ENCODE measurements at regions of chr1 and their contacts with region 1.

Region 1: DNA sequence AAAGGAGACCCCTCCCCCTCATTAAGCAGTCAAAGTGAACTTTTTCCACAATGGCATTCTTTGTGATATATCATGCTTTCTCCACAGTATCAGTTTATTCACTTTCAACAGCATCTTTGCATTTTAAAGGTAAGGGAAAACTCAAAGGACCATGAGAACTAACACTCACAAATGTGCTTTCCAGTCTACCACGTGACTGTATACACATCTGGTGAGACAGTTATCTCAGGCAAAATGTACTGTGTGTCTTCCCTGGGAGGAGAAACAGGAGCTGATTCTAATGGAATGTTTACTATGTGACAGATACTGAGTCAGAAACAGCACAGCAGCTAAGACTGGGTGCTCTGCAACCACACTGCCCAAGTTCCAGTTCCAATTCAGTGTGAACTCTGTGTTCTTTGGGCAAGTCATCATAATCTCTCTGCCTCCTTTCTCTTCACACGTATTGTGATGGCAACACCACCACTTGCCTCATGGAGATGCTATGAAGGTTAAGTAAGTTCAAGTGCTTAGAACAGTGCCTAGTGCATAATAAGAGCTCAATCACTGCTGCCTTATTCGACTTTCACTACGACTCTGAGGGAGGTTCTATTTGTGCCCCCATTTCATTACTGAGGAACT is 79.0 kb downstream of the SLC45A1 start:
- DNase-seq: peak; percentile 71
- H3K4me3 Mint-ChIP-seq: peak overlapping the region; percentile 10
- H3K27ac Mint-ChIP-seq: peak overlapping the region; percentile 83
- H3K4me1 Mint-ChIP-seq: peaks cover 71% of the 10 kb centered on the region
- H3K27me3 Mint-ChIP-seq: no peaks in the 10 kb centered on the region

Region 2: DNA sequence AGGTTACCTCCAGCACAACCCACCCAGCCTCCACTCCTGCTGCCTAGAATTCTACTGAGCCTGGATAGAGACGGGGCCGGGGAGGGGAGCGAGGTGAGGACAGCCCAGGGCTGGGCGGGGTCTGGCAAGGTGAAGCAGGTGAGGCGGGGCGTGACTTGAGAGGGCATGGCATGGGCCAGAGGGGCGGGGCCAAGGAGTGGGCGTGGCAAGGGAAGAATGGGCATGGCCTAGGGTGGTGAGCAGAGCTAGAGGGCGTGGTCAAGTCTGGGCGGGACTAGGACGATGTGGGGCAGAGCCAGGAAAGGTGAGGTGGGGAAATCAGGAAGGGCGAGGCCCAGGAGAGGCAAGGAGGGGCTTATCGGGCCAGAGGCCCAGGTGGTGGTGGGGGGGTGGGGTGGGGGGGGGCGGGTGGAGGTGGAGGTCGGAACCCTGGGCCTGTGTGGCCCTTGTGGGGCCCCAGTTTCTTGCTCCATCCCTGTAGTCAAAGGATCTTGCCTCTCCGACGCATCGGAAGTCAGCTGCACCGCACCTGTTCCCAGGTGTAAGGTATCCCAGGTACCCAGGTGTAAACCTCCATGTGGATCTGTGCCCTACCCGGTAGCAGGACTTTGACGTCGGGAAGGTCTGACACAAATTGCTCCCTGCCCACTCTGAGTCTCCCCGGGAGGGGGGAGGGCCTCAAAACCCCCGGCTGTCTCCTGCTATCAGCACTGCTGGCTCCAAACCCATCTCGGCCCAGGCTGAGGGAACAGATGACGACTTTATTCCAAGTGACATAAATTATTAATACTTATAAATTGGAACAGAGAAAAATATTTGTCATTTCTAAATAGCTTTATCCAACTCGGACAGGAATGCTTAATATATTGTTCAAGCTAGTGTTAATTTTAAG is 511.1 kb before region 1 on chr1:
- CTCF ChIA-PET with region 1: no interaction called
- intact Hi-C with region 1: no loop called
- DNase-seq: peak; percentile 28
- H3K4me3 Mint-ChIP-seq: no peak overlapping the region
- H3K27ac Mint-ChIP-seq: no peak overlapping the region
- H3K4me1 Mint-ChIP-seq: no peaks in the 10 kb centered on the region
- H3K27me3 Mint-ChIP-seq: peaks cover 26% of the 10 kb centered on the region

Region 3: DNA sequence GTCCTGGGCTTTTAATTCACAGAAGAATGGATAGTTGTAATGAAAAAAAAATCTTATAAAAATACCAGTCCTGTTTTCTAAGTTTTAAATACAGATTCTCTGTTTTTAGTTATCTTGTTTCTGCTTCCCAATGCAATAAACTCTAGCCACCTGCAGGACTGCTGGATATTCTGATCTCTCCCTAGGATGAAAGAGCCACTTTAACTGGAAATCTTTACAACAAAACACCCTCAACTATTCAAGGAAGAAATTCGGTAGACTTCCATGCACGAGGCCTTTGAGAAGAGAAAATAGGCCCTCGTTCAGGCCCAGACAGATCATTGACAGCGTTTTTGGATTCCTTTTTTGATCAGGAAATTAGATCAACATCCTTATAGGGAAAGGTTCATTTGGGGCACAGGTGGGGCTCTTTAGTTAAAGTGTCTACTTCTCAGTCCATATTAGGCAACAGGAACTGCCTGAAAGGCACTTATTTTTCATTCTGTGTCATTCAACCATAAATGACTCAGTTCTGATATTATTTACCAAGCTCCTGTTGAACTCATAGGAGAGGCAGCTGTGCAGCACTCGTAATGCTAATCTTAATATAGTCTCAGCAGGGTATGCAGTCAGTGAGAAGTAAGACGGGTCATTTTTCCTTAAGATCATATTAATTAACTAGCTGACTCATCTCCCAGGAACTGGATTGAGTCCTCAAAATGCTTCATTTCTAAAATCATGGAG is 299.7 kb before region 1 on chr1:
- CTCF ChIA-PET with region 1: no interaction called
- intact Hi-C with region 1: no loop called
- DNase-seq: peak; percentile 53
- H3K4me3 Mint-ChIP-seq: no peak overlapping the region
- H3K27ac Mint-ChIP-seq: peak overlapping the region; percentile 81
- H3K4me1 Mint-ChIP-seq: peaks cover 36% of the 10 kb centered on the region
- H3K27me3 Mint-ChIP-seq: peaks cover 17% of the 10 kb centered on the region

Region 4: DNA sequence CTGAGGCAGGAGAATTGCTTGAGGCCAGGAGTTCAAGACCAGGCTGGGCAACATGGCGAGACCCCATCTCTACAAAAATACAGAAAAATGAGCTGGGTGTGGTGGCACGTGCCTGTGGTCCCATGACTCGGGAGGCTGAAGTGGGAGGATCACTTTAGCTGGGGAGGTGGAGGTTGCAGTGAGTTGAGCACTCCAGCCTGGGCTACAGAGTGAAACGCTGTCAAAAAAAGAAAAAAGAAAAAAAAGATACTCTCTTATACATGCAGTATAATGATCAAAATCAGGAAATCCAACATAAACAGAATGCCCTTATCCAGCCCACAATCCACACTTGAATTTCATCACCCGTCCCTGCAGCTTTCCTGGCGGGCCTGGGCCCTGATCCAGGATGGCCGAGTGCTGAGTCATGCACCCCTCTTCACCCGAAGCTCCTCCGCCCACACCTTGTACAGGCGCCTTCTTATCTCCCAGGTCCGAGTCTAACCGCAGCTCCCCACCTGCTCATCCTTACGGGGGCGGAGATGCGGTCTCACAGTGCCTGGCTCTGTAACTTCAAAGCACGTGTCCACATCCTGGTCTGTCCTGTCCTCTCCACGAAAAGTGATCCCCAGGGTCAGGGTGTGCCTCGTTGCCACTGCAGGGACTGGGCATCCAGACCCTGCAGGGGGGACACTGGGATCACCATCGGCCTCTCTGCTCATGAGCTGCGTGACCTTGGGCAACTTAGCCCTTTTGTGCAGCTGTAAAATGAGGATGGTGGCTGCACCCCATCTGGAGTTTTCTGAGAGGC is 199.2 kb before region 1 on chr1:
- CTCF ChIA-PET with region 1: no interaction called
- intact Hi-C with region 1: no loop called
- DNase-seq: no peak
- H3K4me3 Mint-ChIP-seq: no peak overlapping the region
- H3K27ac Mint-ChIP-seq: no peak overlapping the region
- H3K4me1 Mint-ChIP-seq: peaks cover 5% of the 10 kb centered on the region
- H3K27me3 Mint-ChIP-seq: no peaks in the 10 kb centered on the region

Region 5: GRCh38 chr1:8423650-8424538 is 27.0 kb after region 1 on chr1:
- CTCF ChIA-PET with region 1: interaction called, 5 read pairs
- intact Hi-C with region 1: loop called (anchors 1 kb)
- DNase-seq: peak; percentile 62
- H3K4me3 Mint-ChIP-seq: peak overlapping the region; percentile 85
- H3K27ac Mint-ChIP-seq: peak overlapping the region; percentile 97
- H3K4me1 Mint-ChIP-seq: peaks cover 38% of the 10 kb centered on the region
- H3K27me3 Mint-ChIP-seq: no peaks in the 10 kb centered on the region

Region 6: GRCh38 chr1:8525558-8526275 is 128.8 kb after region 1 on chr1:
- CTCF ChIA-PET with region 1: interaction called, 3 read pairs
- intact Hi-C with region 1: loop called (anchors 5 kb)
- DNase-seq: peak; percentile 86
- H3K4me3 Mint-ChIP-seq: no peak overlapping the region
- H3K27ac Mint-ChIP-seq: no peak overlapping the region
- H3K4me1 Mint-ChIP-seq: peaks cover 26% of the 10 kb centered on the region
- H3K27me3 Mint-ChIP-seq: no peaks in the 10 kb centered on the region

Region 7: GRCh38 chr1:8660411-8660828 is 263.5 kb after region 1 on chr1:
- CTCF ChIA-PET with region 1: no interaction called
- intact Hi-C with region 1: loop called (anchors 5 kb)
- DNase-seq: no peak
- H3K4me3 Mint-ChIP-seq: no peak overlapping the region
- H3K27ac Mint-ChIP-seq: no peak overlapping the region
- H3K4me1 Mint-ChIP-seq: peaks cover 9% of the 10 kb centered on the region
- H3K27me3 Mint-ChIP-seq: no peaks in the 10 kb centered on the region

Measured in activated naive CD4-positive, alpha-beta T cell treated with anti-CD3 and anti-CD28 coated beads for 36 hours (primary cell).